B cell (primary cell): ENCODE measurements at regions of chr1 and their contacts with region 1.

Region 1: DNA sequence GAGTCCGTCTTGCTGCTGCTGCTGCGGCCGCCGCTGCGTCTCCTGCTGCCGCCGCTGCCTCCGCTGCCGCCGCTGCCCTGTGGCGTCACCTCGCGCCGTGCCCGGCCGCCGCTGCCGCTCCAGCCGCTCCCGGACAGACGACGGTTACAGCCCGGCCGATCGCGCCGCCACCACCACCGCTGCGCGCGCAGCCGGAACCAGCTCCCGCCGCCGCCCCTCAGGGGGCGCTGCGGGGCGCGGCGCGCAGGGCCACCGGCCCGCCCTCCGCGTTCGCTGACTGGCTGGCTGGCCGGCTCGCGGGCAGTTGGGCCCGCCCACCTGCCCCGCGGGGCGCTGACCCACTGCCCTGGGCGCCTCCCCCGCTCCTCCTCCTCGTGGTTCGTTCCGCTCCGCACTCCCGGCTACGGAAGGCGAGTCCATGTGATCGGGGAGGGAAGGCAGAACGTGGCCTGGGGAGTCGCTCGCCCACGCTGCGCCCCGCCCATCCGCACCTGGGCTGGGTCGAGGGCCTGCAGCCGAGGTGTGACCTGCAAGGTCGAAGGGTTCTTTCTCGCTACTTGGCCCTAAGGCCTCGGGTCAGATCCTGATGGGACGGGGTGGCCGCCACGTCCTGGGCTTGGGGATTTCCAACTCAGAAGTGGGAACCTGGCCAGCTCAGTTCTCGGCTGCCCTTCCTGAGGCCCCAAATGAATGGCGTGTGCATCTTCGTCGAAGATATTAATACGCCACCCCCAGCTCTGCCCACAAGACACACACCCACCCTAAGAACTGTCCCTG is at the start of gene PTP4A2:
- DNase-seq: peak; percentile 95
- ATAC-seq: peak; percentile 82
- H3K4me3 ChIP-seq: peak within 1 kb of the TSS; percentile 59 to 97 (median 78)
- H3K4me3 Mint-ChIP-seq: peak within 1 kb of the TSS; percentile 91
- H3K27ac ChIP-seq: peak within 1 kb of the TSS; percentile 78 to 86
- H3K27ac Mint-ChIP-seq: peak within 1 kb of the TSS; percentile 95
- H3K4me1 ChIP-seq: peaks cover 73 to 76% of the 10 kb centered on the region in 2 donors
- H3K4me1 Mint-ChIP-seq: peaks cover 67% of the 10 kb centered on the region
- H3K27me3 ChIP-seq: no peaks in the 10 kb centered on the region
- H3K27me3 Mint-ChIP-seq: no peaks in the 10 kb centered on the region
- CTCF ChIP-seq: peak; percentile 63
- total RNA-seq, gene PTP4A2: 184 and 193 TPM in 2 replicates

Region 2: DNA sequence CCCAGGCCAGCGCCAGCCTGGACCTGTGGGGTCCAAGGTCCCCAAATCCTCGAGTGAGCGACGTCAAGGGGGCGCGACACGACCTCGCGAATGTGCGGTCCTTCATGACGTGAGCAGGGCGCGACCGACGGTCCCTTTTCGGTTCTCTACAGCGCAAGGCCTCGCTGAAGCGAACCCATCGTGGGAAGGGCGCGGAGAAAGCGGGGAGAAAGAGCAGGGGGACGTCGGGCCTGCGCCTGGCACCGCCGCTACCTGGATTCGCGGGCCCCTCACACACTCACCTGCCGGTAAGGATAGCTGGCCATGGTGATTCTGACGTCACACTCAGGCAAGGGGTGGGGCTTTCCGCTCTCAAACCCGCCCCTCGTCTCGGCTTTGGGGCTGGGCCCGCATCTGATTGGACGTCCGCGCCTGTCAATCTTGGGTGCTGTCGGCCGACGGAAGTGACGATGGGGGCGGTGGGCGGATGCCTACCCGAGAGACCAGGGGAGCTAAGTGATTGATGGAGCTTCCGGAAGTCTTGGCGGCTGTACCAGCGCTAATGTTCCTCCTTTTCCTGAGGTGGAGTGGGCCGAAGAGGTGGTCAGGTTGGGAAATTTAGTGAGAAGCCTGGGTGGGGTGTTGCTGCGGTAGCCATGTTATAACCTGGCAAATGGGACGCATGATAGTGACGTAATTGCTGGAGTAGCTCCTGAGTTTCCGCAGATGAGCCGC is 293.6 kb before region 1 on chr1 and contains the start of gene PEF1:
- CTCF ChIA-PET with region 1: no interaction called
- POLR2A ChIA-PET with region 1: no interaction called
- intact Hi-C with region 1: loop called (anchors 10 kb)
- DNase-seq: peak; percentile 100
- ATAC-seq: peak; percentile 93
- H3K4me3 ChIP-seq: peak within 1 kb of the TSS; percentile 70 to 98 (median 95)
- H3K4me3 Mint-ChIP-seq: peak within 1 kb of the TSS; percentile 98
- H3K27ac ChIP-seq: peak within 1 kb of the TSS; percentile 98 to 99
- H3K27ac Mint-ChIP-seq: peak within 1 kb of the TSS; percentile 99
- H3K4me1 ChIP-seq: peaks cover 17 to 19% of the 10 kb centered on the region in 2 donors
- H3K4me1 Mint-ChIP-seq: peaks cover 31% of the 10 kb centered on the region
- H3K27me3 ChIP-seq: no peaks in the 10 kb centered on the region
- H3K27me3 Mint-ChIP-seq: no peaks in the 10 kb centered on the region
- CTCF ChIP-seq: no peak
- total RNA-seq, gene PEF1: 36.7 and 46.9 TPM in 2 replicates

Region 3: GRCh38 chr1:31760471-31761470 is 177.6 kb before region 1 on chr1:
- CTCF ChIA-PET with region 1: no interaction called
- POLR2A ChIA-PET with region 1: no interaction called
- intact Hi-C with region 1: no loop called
- DNase-seq: peak; percentile 80
- ATAC-seq: peak; percentile 71
- H3K4me3 ChIP-seq: peak overlapping the region in 4 of 5 experiments; percentile 53 to 66 (median 60)
- H3K4me3 Mint-ChIP-seq: peak overlapping the region; percentile 80
- H3K27ac ChIP-seq: no peak overlapping the region
- H3K27ac Mint-ChIP-seq: peak overlapping the region; percentile 63
- H3K4me1 ChIP-seq: peaks cover 35 to 42% of the 10 kb centered on the region in 2 donors
- H3K4me1 Mint-ChIP-seq: peaks cover 34% of the 10 kb centered on the region
- H3K27me3 ChIP-seq: peaks cover 0 to 31% (median 15%) of the 10 kb centered on the region in 4 experiments
- H3K27me3 Mint-ChIP-seq: peaks cover 13% of the 10 kb centered on the region
- CTCF ChIP-seq: no peak

Region 4: GRCh38 chr1:31880890-31881687 is 57.3 kb before region 1 on chr1:
- CTCF ChIA-PET with region 1: interaction called, 4 read pairs
- POLR2A ChIA-PET with region 1: interaction called, 12 read pairs
- intact Hi-C with region 1: no loop called
- DNase-seq: peak; percentile 57
- ATAC-seq: peak; percentile 61
- H3K4me3 ChIP-seq: peak overlapping the region in 3 of 5 experiments; percentile 13 to 34 (median 20)
- H3K4me3 Mint-ChIP-seq: peak overlapping the region; percentile 68
- H3K27ac ChIP-seq: no peak overlapping the region
- H3K27ac Mint-ChIP-seq: peak overlapping the region; percentile 33
- H3K4me1 ChIP-seq: peaks cover 37 to 48% of the 10 kb centered on the region in 2 donors
- H3K4me1 Mint-ChIP-seq: peaks cover 43% of the 10 kb centered on the region
- H3K27me3 ChIP-seq: no peaks in the 10 kb centered on the region
- H3K27me3 Mint-ChIP-seq: no peaks in the 10 kb centered on the region
- CTCF ChIP-seq: no peak

Region 5: GRCh38 chr1:31891280-31891679 is 47.1 kb before region 1 on chr1:
- CTCF ChIA-PET with region 1: interaction called, 3 read pairs
- POLR2A ChIA-PET with region 1: interaction called, 8 read pairs
- intact Hi-C with region 1: loop called (anchors 2 kb)
- DNase-seq: no peak
- ATAC-seq: no peak
- H3K4me3 ChIP-seq: no peak overlapping the region
- H3K4me3 Mint-ChIP-seq: no peak overlapping the region
- H3K27ac ChIP-seq: no peak overlapping the region
- H3K27ac Mint-ChIP-seq: peak overlapping the region; percentile 71
- H3K4me1 ChIP-seq: peaks cover 17 to 18% of the 10 kb centered on the region in 2 donors
- H3K4me1 Mint-ChIP-seq: peaks cover 28% of the 10 kb centered on the region
- H3K27me3 ChIP-seq: no peaks in the 10 kb centered on the region
- H3K27me3 Mint-ChIP-seq: no peaks in the 10 kb centered on the region
- CTCF ChIP-seq: no peak

Region 6: DNA sequence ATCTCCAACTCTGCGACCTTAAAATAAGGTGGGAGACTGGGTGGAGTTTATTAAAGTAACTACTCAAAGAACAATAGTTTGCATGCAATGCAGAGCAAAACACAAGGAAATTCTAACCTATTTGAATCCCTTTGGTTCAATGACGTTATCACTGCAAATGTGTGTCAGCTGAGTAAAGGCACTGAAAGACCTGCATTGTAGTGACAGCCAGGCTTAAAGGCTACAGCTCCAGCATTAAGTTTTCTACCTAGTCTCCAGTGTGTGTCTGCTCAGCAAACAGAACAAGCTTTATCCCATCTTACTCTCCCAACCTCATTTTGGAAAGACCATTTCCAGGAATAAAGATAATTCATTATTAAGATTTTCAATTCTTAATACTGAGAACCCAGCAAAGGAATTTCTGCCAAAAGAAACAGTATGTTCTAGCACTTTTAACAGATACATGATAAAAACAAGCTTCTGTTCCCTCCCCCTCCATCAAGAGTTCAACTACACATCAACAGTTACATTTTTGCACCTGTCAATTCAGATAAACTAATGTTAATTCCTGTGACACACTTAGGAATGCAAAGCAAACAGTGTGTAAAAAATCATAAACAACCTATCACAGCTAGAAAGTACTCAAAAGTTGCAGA is 14.3 kb before region 1 on chr1:
- CTCF ChIA-PET with region 1: interaction called, 10 read pairs
- POLR2A ChIA-PET with region 1: interaction called, 3 read pairs
- intact Hi-C with region 1: loop called (anchors 2 kb)
- DNase-seq: no peak
- ATAC-seq: no peak
- H3K4me3 ChIP-seq: no peak overlapping the region
- H3K4me3 Mint-ChIP-seq: peak overlapping the region; percentile 19
- H3K27ac ChIP-seq: peak overlapping the region in 1 of 2 donors; percentile 18
- H3K27ac Mint-ChIP-seq: peak overlapping the region; percentile 67
- H3K4me1 ChIP-seq: peaks cover 57 to 71% of the 10 kb centered on the region in 2 donors
- H3K4me1 Mint-ChIP-seq: peaks cover 76% of the 10 kb centered on the region
- H3K27me3 ChIP-seq: no peaks in the 10 kb centered on the region
- H3K27me3 Mint-ChIP-seq: no peaks in the 10 kb centered on the region
- CTCF ChIP-seq: no peak

Region 7: DNA sequence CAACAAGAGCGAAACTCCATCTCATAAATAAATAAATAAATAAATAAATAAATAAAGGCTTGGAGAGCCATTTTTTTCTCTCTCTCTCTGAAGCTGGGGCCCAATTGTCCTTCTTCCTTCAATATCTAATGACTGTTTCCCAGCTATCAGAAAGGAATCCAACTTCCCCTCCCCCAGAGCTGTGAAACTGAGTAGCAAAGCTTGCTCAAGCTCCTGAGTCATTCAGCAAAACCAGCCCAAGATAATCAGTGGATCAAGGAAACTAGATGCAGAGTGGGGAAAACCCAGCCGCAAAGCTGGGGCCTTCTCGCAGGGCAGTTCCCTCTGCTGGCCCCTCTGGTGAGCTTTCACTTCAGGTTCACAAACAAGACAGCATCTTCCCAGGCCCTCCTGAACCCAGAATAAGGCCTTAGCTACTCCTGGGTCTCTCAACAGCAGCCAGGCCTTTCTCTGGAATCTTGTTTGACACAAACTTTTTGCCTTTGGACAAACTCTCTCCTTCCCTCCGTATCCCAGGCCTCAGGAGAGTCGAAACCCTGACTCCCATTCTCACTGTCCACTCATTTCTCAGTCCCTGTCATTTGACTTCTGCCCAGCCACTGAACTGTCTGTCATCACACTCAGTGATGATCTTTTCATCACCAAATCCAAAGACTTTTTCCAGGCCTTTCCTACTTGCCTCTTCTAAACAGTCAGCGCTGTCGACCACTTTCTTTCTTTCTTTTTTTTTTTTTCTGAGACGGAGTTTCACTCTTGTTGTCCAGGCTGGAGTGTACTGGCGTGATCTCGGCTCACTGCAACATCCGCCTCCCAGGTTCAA is 17.8 kb after region 1 on chr1:
- CTCF ChIA-PET with region 1: interaction called, 433 read pairs
- POLR2A ChIA-PET with region 1: interaction called, 11 read pairs
- intact Hi-C with region 1: loop called (anchors 1 kb)
- DNase-seq: peak; percentile 85
- ATAC-seq: peak; percentile 96
- H3K4me3 ChIP-seq: no peak overlapping the region
- H3K4me3 Mint-ChIP-seq: peak overlapping the region; percentile 51
- H3K27ac ChIP-seq: peak overlapping the region; percentile 65 to 82
- H3K27ac Mint-ChIP-seq: peak overlapping the region; percentile 77
- H3K4me1 ChIP-seq: peaks cover 26 to 36% of the 10 kb centered on the region in 2 donors
- H3K4me1 Mint-ChIP-seq: peaks cover 28% of the 10 kb centered on the region
- H3K27me3 ChIP-seq: no peaks in the 10 kb centered on the region
- H3K27me3 Mint-ChIP-seq: no peaks in the 10 kb centered on the region
- CTCF ChIP-seq: peak; percentile 33

Region 8: GRCh38 chr1:32138943-32139342 is 200.6 kb after region 1 on chr1:
- CTCF ChIA-PET with region 1: no interaction called
- POLR2A ChIA-PET with region 1: no interaction called
- intact Hi-C with region 1: no loop called
- DNase-seq: no peak
- ATAC-seq: no peak
- H3K4me3 ChIP-seq: no peak overlapping the region
- H3K4me3 Mint-ChIP-seq: no peak overlapping the region
- H3K27ac ChIP-seq: peak overlapping the region in 1 of 2 donors; percentile 39
- H3K27ac Mint-ChIP-seq: no peak overlapping the region
- H3K4me1 ChIP-seq: peaks cover 3 to 5% of the 10 kb centered on the region in 2 donors
- H3K4me1 Mint-ChIP-seq: peaks cover 43% of the 10 kb centered on the region
- H3K27me3 ChIP-seq: no peaks in the 10 kb centered on the region
- H3K27me3 Mint-ChIP-seq: no peaks in the 10 kb centered on the region
- CTCF ChIP-seq: no peak